Activated B cell treated with CpG ODN at 0.5 μM for 24 hours (primary cell): ENCODE measurements at regions of chr12 and their contacts with region 1.

Region 1: DNA sequence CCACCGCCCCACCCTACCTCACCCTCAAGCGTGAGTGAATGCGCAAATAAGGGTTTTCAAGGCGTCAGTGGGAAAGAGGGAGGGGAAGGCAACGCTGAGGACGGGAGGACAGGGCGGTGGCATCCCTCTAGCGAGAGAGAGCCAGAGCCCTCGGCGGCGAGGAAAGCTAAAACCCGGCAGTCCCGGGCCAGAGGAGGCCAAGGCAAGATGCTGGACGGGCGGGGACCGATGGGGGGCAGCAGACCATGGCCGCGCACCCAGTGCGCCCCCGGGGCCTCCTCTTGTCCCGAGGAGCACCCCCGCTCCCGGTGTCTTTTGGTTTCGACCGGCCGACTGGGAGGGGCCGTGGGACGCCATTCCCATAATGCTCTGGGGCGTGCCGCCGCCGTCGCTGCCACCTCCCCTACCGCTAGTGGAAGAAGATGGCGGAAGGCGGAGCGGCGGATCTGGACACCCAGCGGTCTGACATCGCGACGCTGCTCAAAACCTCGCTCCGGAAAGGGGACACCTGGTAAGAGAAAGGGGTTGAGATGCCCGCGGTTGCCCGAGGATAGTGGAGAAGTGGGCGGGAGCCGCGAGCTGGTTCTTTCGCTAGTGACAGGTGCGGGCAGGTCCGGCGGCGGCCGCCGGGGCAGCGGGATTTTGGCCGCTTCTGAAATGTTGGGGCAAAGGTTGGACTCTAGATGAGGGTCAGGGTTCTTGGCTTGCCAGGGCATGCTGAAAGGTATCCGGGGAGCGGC is at the start of gene USP15:
- DNase-seq: peak; percentile 95
- ATAC-seq: peak; percentile 82
- H3K4me3 Mint-ChIP-seq: peak within 1 kb of the TSS; percentile 100
- H3K27ac Mint-ChIP-seq: peak within 1 kb of the TSS; percentile 100
- H3K4me1 Mint-ChIP-seq: peaks cover 53% of the 10 kb centered on the region
- H3K27me3 Mint-ChIP-seq: no peaks in the 10 kb centered on the region
- CTCF ChIP-seq: no peak
- total RNA-seq, gene USP15: 122 and 150 TPM in 2 replicates

Region 2: GRCh38 chr12:62282057-62282774 is 22.1 kb after region 1 on chr12:
- CTCF ChIA-PET with region 1: no interaction called
- POLR2A ChIA-PET with region 1: interaction called, 4 read pairs
- intact Hi-C with region 1: loop called (anchors 2 kb)
- DNase-seq: no peak
- ATAC-seq: no peak
- H3K4me3 Mint-ChIP-seq: no peak overlapping the region
- H3K27ac Mint-ChIP-seq: no peak overlapping the region
- H3K4me1 Mint-ChIP-seq: peaks cover 72% of the 10 kb centered on the region
- H3K27me3 Mint-ChIP-seq: no peaks in the 10 kb centered on the region
- CTCF ChIP-seq: no peak

Region 3: DNA sequence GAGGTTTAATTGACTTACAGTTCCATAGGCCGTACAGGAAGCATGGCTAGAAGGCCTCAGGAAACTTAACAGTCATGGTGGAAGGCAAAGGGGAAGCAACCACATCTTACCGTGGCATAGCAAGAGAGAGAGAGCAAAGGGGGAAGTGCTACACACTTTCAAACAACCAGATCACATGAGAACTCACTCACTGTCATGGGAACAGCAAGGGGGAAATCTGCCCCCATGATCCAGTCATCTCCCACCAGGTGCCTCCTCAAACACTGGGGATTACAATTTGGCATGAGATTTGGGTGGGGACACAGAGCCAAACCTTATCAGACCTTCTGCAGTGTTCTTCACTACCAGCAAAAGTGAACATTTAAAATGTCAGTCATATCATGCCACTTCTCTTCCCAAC is 58.9 kb after region 1 on chr12:
- CTCF ChIA-PET with region 1: no interaction called
- POLR2A ChIA-PET with region 1: interaction called, 4 read pairs
- intact Hi-C with region 1: loop called (anchors 5 kb)
- DNase-seq: no peak
- ATAC-seq: peak; percentile 45
- H3K4me3 Mint-ChIP-seq: no peak overlapping the region
- H3K27ac Mint-ChIP-seq: peak overlapping the region; percentile 21
- H3K4me1 Mint-ChIP-seq: peaks cover 27% of the 10 kb centered on the region
- H3K27me3 Mint-ChIP-seq: no peaks in the 10 kb centered on the region
- CTCF ChIP-seq: no peak

Region 4: DNA sequence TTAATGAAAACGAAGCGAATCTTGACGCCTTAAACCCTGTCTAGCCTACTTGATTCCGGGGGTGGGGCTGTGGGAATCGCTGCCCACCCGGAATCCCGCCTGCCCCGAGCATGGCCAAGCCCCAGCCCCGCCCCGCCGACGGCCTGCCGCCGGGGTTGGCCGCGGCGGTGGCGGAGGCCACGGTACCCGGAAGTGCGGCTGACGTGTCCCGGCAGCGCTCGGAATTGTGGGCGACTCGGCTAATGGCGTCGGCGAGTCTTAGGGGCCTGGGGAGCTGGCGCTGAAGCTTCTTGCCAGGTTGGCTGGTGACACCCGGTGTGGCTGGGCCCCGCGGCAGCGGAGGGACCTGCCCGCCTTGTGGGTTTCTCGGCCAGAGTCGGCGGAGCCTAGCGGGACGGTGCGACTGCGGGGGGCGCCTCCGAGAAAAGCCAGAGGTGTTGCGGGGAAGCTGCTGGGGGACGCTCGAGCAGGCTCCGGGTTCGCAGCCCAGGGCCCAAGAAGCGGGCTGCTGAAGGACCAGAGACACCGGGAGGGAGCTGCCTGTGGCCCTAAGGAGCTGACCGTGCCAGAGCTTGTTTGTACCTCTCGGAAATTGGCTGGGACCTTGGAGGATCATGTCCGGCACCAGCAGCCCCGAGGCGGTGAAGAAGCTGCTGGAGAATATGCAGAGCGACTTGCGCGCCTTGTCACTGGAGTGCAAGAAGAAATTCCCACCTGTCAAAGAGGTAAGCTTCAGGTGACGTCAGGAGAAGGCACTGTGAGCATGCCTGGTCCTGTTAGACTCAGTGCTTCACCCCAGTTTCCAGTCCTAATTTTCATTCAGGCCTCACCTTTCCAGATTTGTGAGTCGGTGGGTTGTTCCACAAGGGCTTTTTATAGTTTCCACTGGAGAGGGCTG is 206.7 kb after region 1 on chr12 and contains the start of gene MON2:
- CTCF ChIA-PET with region 1: no interaction called
- POLR2A ChIA-PET with region 1: interaction called, 15 read pairs
- intact Hi-C with region 1: loop called (anchors 1 kb)
- DNase-seq: peak; percentile 85
- ATAC-seq: peak; percentile 96
- H3K4me3 Mint-ChIP-seq: peak within 1 kb of the TSS; percentile 84
- H3K27ac Mint-ChIP-seq: peak within 1 kb of the TSS; percentile 84
- H3K4me1 Mint-ChIP-seq: peaks cover 28% of the 10 kb centered on the region
- H3K27me3 Mint-ChIP-seq: no peaks in the 10 kb centered on the region
- CTCF ChIP-seq: no peak
- total RNA-seq, gene MON2: 51.6 and 69.9 TPM in 2 replicates

Region 5: DNA sequence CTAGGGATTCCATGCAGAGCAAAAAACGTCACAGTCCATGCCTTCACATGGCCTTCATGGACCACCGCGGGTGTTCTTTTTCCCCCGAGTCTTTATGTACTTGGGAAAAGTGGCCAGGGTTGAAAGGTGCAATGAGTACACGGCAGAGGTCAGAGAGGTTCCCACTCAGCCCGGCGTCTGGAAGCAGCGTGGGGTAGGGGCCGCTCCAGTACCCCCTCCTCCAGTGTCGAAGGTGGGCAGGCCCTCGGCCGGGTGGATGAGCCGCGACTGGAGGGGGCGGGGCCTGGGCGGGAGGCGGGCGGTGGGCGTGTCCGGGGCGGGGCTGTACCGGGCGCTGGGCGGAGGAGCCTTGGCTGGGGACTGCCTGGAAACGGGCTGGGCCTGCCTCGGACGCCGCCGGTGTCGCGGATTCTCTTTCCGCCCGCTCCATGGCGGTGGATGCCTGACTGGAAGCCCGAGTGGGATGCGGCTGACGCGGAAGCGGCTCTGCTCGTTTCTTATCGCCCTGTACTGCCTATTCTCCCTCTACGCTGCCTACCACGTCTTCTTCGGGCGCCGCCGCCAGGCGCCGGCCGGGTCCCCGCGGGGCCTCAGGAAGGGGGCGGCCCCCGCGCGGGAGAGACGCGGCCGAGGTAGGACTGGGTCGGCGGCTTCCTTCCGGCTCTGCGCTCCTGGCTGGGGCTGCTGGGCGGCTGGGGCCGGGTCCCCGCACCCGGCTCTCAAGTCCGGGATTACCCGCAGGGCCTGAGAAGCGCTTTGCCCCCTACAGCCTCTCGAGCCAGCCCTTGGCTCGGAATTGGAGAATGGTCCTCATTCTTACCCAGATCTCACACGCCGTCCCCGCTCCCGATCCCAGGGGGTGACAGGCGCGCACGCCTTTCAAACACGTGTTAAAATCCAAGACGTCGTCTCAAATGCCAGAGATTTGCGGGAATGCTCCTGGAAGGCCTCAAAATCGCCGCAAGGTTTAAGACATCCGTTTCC is 1519.6 kb after region 1 on chr12 and contains the start of gene RXYLT1:
- CTCF ChIA-PET with region 1: no interaction called
- POLR2A ChIA-PET with region 1: no interaction called
- intact Hi-C with region 1: loop called (anchors 2 kb)
- DNase-seq: peak; percentile 82
- ATAC-seq: peak; percentile 93
- H3K4me3 Mint-ChIP-seq: peak within 1 kb of the TSS; percentile 98
- H3K27ac Mint-ChIP-seq: peak within 1 kb of the TSS; percentile 90
- H3K4me1 Mint-ChIP-seq: peaks cover 20% of the 10 kb centered on the region
- H3K27me3 Mint-ChIP-seq: no peaks in the 10 kb centered on the region
- CTCF ChIP-seq: no peak
- total RNA-seq, gene RXYLT1: 16.3 and 22.7 TPM in 2 replicates